PC-9 (cell line): ENCODE measurements at regions of chr1 and their contacts with region 1.

Region 1: GRCh38 chr1:213474054-213474453 is 423.0 kb downstream of the RPS6KC1 start:
- DNase-seq: no peak
- H3K4me3 ChIP-seq: no peak overlapping the region
- H3K27ac ChIP-seq: no peak overlapping the region
- H3K4me1 ChIP-seq: no peaks in the 10 kb centered on the region
- H3K27me3 ChIP-seq: no peaks in the 10 kb centered on the region
- CTCF ChIP-seq: no peak

Region 2: DNA sequence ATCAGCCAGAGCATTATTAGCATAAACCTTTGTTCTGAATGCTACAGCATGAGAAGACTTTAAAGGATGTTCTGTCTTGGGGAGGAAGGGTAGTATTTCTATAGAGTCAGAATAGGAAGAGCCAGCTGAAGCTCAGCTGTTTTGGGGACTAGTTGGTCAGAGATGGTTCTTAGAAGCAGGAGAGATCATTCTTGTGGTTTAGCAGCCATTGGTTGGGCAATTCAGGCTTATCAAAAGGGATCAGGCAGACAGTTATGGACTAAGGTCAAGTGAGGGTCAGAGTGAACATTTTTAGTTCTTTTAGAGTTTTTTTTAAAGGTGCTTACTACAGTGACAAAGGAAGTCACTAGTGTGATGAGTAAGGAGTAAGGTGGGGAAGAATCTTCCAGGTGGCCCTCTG is 177.5 kb before region 1 on chr1:
- CTCF ChIA-PET with region 1: no interaction called
- POLR2A ChIA-PET with region 1: no interaction called
- intact Hi-C with region 1: no loop called
- DNase-seq: no peak
- H3K4me3 ChIP-seq: no peak overlapping the region
- H3K27ac ChIP-seq: no peak overlapping the region
- H3K4me1 ChIP-seq: no peaks in the 10 kb centered on the region
- H3K27me3 ChIP-seq: no peaks in the 10 kb centered on the region
- CTCF ChIP-seq: no peak

Region 3: GRCh38 chr1:213499444-213499843 is 25.4 kb after region 1 on chr1:
- CTCF ChIA-PET with region 1: interaction called, 10 read pairs
- POLR2A ChIA-PET with region 1: no interaction called
- intact Hi-C with region 1: no loop called
- DNase-seq: no peak
- H3K4me3 ChIP-seq: no peak overlapping the region
- H3K27ac ChIP-seq: no peak overlapping the region
- H3K4me1 ChIP-seq: no peaks in the 10 kb centered on the region
- H3K27me3 ChIP-seq: no peaks in the 10 kb centered on the region
- CTCF ChIP-seq: no peak